ENCODE measurements at regions of chr3 and their contacts with region 1.

Region 1: GRCh38 chr3:137013955-137014688 is 56.3 kb downstream of the IL20RB start:
- DNase-seq: peak; percentile 85
- ATAC-seq: peak; percentile 94
- H3K4me3 Mint-ChIP-seq: peak overlapping the region; percentile 65
- H3K27ac Mint-ChIP-seq: peak overlapping the region; percentile 35
- H3K4me1 Mint-ChIP-seq: peaks cover 14% of the 10 kb centered on the region
- H3K27me3 Mint-ChIP-seq: peaks cover 2% of the 10 kb centered on the region

Region 2: DNA sequence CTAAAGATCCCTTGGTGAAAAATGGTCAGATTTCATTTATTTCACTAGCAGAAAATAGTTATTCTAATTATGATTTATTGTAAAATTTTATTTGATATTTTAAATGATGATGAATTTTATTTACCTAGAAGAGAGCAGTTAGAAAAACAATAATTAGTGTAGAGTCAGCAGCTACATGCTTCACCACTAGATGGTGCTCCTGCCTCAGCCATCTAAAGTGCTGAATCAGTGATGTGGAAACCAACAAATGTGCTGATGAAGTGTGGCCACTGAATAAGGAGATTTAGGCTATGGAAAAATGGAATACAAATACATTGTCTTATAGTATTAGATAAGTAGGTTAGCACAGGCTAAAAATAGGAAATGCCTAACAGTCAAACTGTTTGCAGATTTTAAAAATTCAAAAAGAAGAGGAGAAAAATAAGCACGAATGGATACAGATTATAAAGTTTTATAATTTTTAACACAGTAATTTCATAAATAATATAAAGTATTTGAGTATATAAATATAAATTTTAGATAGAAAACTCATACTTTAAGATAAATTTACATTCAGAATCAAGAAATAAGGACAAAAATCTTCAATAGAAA is 938.8 kb before region 1 on chr3:
- CTCF ChIA-PET with region 1: interaction called, 27 read pairs
- POLR2A ChIA-PET with region 1: no interaction called
- DNase-seq: peak; percentile 79
- ATAC-seq: peak; percentile 65
- H3K4me3 Mint-ChIP-seq: no peak overlapping the region
- H3K27ac Mint-ChIP-seq: no peak overlapping the region
- H3K4me1 Mint-ChIP-seq: peaks cover 8% of the 10 kb centered on the region
- H3K27me3 Mint-ChIP-seq: peaks cover 2% of the 10 kb centered on the region

Region 3: DNA sequence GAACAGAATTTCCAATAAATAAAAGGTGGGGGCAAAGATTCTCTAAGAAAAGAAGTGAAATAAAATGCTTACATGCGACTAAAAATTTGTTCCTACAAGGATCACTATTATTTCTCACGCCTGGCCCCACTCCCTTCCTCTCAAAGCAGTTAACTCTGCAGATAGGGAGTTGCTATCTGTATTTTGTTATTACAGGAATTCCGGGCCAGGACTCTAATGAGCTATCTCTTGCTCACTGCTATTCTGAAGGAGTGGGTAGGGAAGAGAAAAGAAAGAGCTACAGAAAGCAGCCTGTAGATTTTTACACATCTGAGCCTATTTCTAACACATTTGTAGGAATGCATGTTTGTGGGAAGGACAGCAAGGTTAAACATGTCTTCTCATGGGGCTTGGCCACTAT is 623.5 kb before region 1 on chr3:
- CTCF ChIA-PET with region 1: interaction called, 26 read pairs
- POLR2A ChIA-PET with region 1: no interaction called
- DNase-seq: no peak
- ATAC-seq: no peak
- H3K4me3 Mint-ChIP-seq: no peak overlapping the region
- H3K27ac Mint-ChIP-seq: no peak overlapping the region
- H3K4me1 Mint-ChIP-seq: no peaks in the 10 kb centered on the region
- H3K27me3 Mint-ChIP-seq: no peaks in the 10 kb centered on the region

Region 4: DNA sequence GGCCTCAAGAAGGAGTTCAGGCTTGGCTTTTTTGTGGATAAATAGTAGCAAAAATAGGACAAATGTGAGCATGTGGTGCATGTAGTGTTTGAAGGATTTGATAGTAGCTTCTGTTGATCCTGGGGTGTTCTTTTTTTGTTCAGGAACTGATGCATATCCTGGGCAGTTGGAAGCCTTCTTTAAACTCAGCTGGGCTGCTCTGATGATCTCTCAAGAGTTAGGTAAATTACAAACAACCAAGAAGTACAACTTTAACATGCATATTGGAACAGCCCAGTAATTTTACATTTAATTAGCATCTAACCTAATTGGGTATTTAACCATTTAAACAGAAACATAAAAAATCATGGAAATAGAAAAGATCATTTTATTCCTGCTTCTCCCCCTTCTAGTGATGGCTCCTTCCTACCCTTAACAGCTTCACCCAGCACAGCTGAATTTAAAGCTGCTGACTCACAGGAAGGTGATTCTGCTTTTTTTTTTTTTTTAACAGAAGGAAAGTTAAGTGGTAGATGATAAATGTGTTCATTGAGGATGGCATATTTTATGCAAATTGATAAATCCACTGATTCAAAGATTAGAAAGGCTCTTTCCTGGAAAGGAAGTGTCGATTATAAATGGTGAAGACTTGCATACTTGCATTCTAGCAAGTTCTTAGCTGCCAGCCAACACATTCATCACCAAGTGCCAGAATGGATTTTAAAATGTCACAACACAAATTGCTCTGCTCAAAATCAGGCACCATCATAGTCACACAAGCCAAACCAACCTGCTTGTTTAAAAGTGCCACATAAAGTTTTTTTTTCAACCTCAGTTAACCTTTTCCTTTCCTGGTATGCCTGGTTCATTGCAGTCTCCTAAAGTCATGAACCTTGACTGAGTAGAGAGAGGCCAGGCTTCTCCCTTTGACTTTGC is 175.2 kb before region 1 on chr3:
- CTCF ChIA-PET with region 1: interaction called, 11 read pairs
- POLR2A ChIA-PET with region 1: no interaction called
- DNase-seq: no peak
- ATAC-seq: no peak
- H3K4me3 Mint-ChIP-seq: no peak overlapping the region
- H3K27ac Mint-ChIP-seq: no peak overlapping the region
- H3K4me1 Mint-ChIP-seq: peaks cover 18% of the 10 kb centered on the region
- H3K27me3 Mint-ChIP-seq: no peaks in the 10 kb centered on the region

Region 5: GRCh38 chr3:137000039-137000438 is 14.1 kb before region 1 on chr3:
- CTCF ChIA-PET with region 1: interaction called, 10 read pairs
- POLR2A ChIA-PET with region 1: no interaction called
- DNase-seq: no peak
- ATAC-seq: no peak
- H3K4me3 Mint-ChIP-seq: no peak overlapping the region
- H3K27ac Mint-ChIP-seq: no peak overlapping the region
- H3K4me1 Mint-ChIP-seq: no peaks in the 10 kb centered on the region
- H3K27me3 Mint-ChIP-seq: no peaks in the 10 kb centered on the region

Region 6: DNA sequence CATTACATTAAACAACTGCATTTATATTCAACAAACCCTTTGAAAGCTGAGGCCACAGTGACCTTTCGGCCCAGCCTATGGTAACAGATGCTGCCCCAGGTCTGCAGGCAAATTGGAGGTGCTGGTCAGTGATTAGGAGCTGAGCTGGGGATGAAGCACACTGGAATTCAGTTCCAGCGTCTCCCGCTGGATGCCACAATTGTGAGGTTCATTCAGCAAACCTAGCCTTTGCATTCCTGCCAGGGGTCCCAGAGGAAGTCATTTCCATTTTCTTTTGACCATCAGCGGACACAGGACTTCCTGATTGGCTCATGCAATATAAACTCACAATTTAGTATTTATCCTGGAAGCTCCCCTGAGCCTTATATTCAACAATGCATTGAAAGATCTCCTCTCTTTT is 33.1 kb after region 1 on chr3:
- CTCF ChIA-PET with region 1: no interaction called
- POLR2A ChIA-PET with region 1: no interaction called
- DNase-seq: no peak
- ATAC-seq: no peak
- H3K4me3 Mint-ChIP-seq: no peak overlapping the region
- H3K27ac Mint-ChIP-seq: no peak overlapping the region
- H3K4me1 Mint-ChIP-seq: no peaks in the 10 kb centered on the region
- H3K27me3 Mint-ChIP-seq: peaks cover 3% of the 10 kb centered on the region

Measured in activated CD8-positive, alpha-beta T cell treated with anti-CD3 and anti-CD28 coated beads, Interleukin-2, amount 10 ng/mL, durations not matched to agents 7 days and 5 days (primary cell).